K562 (cell line): ENCODE measurements at regions of chr16 and their contacts with region 1.

Region 1: DNA sequence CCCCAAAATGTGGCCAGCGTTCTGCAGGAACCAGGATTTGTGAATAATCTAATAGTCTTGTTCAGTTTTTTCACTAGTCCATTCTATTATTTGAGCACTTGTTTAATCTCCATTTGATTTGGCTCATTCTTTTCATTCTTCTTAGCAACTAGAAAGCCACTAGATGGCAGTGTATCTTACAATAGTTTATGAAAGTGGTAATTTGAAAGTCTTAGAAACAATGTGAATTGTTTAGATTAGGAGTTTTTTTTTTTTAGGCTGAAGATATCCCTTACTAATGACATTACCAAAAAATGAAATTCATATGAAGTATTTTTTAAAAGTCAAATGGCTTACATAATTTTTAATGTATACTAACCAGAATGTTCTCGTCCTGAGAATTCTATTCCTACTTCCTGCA is 6.7 kb downstream of the ERI2 start:
- DNase-seq: peak in 2 of 4 experiments; percentile 22 to 29
- ATAC-seq: 0 out of 3 replicates have a peak, but pooled peaks have one; percentile 37
- H3K4me3 ChIP-seq: no peak overlapping the region
- H3K27ac ChIP-seq: peak overlapping the region; percentile 34; the same call in 1 of the 3 replicates
- H3K4me1 ChIP-seq: peaks cover 6 to 11% of the 10 kb centered on the region in 2 experiments; a peak in 3 of 5 replicates
- H3K27me3 ChIP-seq: no peaks in the 10 kb centered on the region
- CTCF ChIP-seq: peak in 2 of 3 experiments; percentile 35 to 65; a peak in 3 of 6 replicates
- EP300 ChIP-seq: no peak
- POLR2A ChIP-seq: no peak
- RAD21 ChIP-seq: peak; percentile 37 to 64

Region 2: DNA sequence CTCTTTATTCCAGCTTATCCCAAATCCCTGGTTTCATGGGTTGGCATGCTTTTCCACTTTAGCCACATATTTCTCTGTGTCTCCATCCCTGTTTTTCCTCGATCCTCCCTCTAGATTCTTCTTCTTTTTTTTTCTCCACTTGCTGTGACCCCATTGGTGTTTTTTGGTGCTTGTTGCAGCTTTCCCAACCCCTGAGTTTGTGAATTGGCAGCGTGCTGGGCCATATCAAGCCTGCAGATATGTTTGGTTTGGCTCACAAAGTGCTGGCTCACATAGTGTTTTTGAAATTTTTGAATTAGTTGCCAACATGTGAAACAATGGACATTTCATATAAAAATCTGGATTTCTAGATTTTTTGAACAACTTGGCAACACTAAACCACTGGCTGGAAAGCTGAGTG is 734.7 kb before region 1 on chr16:
- CTCF ChIA-PET with region 1: no interaction called
- POLR2A ChIA-PET with region 1: no interaction called
- in situ Hi-C with region 1: no loop called
- intact Hi-C with region 1: no loop called
- DNase-seq: no peak
- ATAC-seq: no peak
- H3K4me3 ChIP-seq: no peak overlapping the region
- H3K27ac ChIP-seq: no peak overlapping the region
- H3K4me1 ChIP-seq: no peaks in the 10 kb centered on the region
- H3K27me3 ChIP-seq: peaks cover 0 to 4% of the 10 kb centered on the region in 2 experiments; a peak in 2 of 5 replicates
- CTCF ChIP-seq: no peak
- EP300 ChIP-seq: no peak
- POLR2A ChIP-seq: no peak
- RAD21 ChIP-seq: no peak

Region 3: DNA sequence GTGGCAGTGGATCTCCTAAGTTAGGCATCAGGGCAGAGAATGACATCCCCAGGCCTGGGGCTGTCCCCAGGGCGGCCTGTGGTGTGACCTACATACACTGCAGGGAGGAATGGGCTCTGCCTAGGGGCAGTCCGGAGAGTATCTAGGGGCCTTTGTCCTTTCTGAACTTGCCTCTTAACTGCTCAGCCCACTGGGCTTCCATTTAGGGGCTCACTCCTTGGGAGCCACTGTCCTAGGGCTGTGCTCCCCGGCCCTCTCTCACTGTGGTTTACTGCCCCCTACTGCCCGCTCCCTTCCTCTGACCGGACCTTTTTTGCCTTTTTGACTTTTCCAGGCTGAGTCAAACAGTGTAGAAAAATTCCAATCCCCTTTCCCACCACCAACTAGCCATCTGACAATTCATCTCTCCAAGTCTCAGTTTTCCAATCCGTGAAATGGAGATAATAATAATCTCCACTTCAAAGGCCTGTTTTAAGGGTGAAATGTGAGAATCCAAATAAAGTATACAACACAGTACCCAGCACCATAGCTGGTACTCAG is 284.2 kb after region 1 on chr16:
- CTCF ChIA-PET with region 1: interaction called, 12 read pairs
- POLR2A ChIA-PET with region 1: interaction called, 3 read pairs
- in situ Hi-C with region 1: no loop called
- intact Hi-C with region 1: no loop called
- DNase-seq: peak; percentile 52 to 67 (median 60)
- ATAC-seq: peak; percentile 98
- H3K4me3 ChIP-seq: no peak overlapping the region
- H3K27ac ChIP-seq: no peak overlapping the region
- H3K4me1 ChIP-seq: no peaks in the 10 kb centered on the region; a peak in 1 of 5 replicates
- H3K27me3 ChIP-seq: peaks cover 0 to 7% of the 10 kb centered on the region in 2 experiments; a peak in 2 of 5 replicates
- CTCF ChIP-seq: peak; percentile 75 to 88 (median 83)
- EP300 ChIP-seq: no peak
- POLR2A ChIP-seq: no peak
- RAD21 ChIP-seq: peak; percentile 92 to 94